ENCODE measurements at regions of chr4 and their contacts with region 1.

Region 1: GRCh38 chr4:155134136-155134535 is 74.3 kb upstream of the NPY2R start:
- DNase-seq: no peak
- H3K4me3 ChIP-seq: no peak overlapping the region
- H3K27ac ChIP-seq: no peak overlapping the region
- H3K4me1 ChIP-seq: no peaks in the 10 kb centered on the region
- H3K27me3 ChIP-seq: no peaks in the 10 kb centered on the region
- CTCF ChIP-seq: no peak
- EP300 ChIP-seq: no peak
- POLR2A ChIP-seq: no peak

Region 2: GRCh38 chr4:155079871-155080270 is 54.3 kb before region 1 on chr4:
- in situ Hi-C with region 1: no loop called
- intact Hi-C with region 1: loop called (anchors 10 kb)
- DNase-seq: no peak
- H3K4me3 ChIP-seq: no peak overlapping the region
- H3K27ac ChIP-seq: no peak overlapping the region
- H3K4me1 ChIP-seq: no peaks in the 10 kb centered on the region
- H3K27me3 ChIP-seq: no peaks in the 10 kb centered on the region
- CTCF ChIP-seq: no peak
- EP300 ChIP-seq: no peak
- POLR2A ChIP-seq: no peak

Measured in transverse colon (tissue), 4 donors.